GM18951 (cell line): ENCODE measurements at regions of chr10 and their contacts with region 1.

Region 1: DNA sequence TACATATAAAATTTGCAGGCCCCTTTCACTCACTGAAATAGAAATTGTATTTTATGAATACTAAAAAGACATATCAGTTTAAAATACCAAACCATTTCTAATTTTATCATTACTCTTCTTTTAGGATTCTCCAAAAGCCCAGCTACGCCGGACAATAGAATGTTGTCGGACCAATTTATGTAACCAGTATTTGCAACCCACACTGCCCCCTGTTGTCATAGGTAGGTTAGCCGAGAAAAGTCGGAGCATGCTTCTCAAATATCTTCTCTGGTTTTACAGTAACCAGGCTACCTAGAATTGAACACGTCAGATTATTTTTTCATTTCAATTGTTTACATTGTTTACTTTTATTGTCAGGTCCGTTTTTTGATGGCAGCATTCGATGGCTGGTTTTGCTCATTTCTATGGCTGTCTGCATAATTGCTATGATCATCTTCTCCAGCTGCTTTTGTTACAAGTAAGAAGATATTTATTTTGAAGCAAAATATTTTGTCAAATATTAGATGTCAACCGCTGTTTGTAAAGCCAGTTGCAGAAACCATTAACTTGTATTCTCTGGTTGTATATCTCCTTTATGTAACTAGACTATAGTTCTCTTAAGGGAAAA is 57.6 kb downstream of the MMRN2 start:
- POLR2A ChIP-seq: no peak

Region 2: DNA sequence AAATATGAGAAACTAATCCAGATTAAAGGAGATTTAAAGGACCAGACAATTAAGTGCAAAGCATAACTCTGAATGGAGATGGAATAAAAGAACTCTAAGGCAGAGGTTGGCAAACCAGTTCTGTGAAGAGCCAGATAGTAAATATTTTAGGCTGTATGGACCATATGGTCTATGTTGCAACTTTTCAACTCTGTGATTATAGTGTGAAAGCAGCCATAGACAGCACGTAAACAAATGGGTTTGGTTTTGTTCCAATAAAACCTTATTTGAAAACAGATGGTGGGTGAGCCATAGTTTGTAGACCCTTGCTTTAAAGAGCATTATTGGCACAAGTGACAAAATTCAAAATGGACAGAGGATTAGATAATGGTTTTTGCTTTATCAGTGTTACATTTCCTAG is 1687.2 kb before region 1 on chr10:
- in situ Hi-C with region 1: no loop called
- POLR2A ChIP-seq: no peak

Region 3: GRCh38 chr10:86706401-86706841 is 193.4 kb before region 1 on chr10:
- in situ Hi-C with region 1: loop called (anchors 10 kb)
- POLR2A ChIP-seq: no peak

Region 4: GRCh38 chr10:86936661-86937501 is 37.1 kb after region 1 on chr10:
- in situ Hi-C with region 1: no loop called
- POLR2A ChIP-seq: no peak